Left lung (tissue), 14 donors: ENCODE measurements at regions of chr1 and their contacts with region 1.

Region 1: DNA sequence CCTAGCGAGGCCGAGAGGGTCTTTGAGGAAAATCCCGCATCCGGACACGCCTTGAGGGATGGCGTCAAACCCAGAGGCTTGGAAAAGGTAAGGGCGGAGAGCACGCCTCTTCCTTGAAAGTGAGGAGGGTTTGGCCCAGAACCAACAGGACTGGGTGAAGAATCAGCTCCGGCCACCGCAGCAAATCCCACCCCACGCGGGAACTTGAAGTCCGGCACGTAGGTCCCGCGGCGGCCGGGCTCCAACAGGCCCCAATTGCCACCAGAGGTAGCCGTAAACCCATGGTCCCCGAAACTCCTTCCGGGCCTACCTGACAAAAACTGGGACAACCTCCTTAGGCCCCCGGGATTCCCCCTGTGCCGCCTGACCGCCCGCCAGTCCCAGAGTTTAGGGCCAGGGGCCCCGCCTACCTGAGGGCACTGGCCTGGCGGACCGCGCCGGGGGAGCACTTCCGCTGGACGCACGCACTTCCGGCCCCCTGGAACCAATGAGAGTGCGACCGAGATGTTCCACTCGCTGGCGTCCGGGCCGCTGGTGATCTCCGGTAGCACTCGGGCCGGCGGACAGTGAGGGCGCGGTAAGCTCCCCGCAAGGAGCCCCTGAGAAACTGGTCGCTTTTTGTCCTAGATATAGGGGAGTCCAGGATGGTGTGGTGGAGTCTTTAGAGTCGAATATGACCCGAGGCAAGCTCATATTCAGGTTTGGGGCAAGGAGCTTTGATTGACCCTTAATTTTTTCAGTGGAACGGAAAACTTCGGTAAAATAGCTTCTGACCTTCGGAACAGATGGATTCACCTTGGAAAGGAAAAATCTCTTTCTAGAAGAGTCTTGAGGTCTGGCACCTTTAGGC is at the starts of genes LZIC and NMNAT1:
- DNase-seq: peak; percentile 90 to 96 (median 94)
- ATAC-seq: peak; percentile 99
- H3K4me3 ChIP-seq: peak within 1 kb of the TSS; percentile 63 to 65
- H3K27ac ChIP-seq: peak within 1 kb of the TSS; percentile 81 to 90
- H3K4me1 ChIP-seq: peaks cover 4 to 28% of the 10 kb centered on the region in 2 donors
- H3K27me3 ChIP-seq: no peaks in the 10 kb centered on the region
- CTCF ChIP-seq: peak in 1 of 2 donors; percentile 13
- polyA plus RNA-seq, gene LZIC: 59.9 to 72.8 (median 70.4) TPM
- polyA plus RNA-seq, gene NMNAT1: 15.4 to 19.6 (median 17.3) TPM

Region 2: GRCh38 chr1:9700340-9700739 is 242.8 kb before region 1 on chr1:
- intact Hi-C with region 1: loop called in 1 of 2 experiments (anchors 5 kb)
- DNase-seq: no peak
- ATAC-seq: no peak
- H3K4me3 ChIP-seq: no peak overlapping the region
- H3K27ac ChIP-seq: no peak overlapping the region
- H3K4me1 ChIP-seq: peaks cover 0 to 33% of the 10 kb centered on the region in 2 donors
- H3K27me3 ChIP-seq: no peaks in the 10 kb centered on the region
- CTCF ChIP-seq: no peak

Region 3: DNA sequence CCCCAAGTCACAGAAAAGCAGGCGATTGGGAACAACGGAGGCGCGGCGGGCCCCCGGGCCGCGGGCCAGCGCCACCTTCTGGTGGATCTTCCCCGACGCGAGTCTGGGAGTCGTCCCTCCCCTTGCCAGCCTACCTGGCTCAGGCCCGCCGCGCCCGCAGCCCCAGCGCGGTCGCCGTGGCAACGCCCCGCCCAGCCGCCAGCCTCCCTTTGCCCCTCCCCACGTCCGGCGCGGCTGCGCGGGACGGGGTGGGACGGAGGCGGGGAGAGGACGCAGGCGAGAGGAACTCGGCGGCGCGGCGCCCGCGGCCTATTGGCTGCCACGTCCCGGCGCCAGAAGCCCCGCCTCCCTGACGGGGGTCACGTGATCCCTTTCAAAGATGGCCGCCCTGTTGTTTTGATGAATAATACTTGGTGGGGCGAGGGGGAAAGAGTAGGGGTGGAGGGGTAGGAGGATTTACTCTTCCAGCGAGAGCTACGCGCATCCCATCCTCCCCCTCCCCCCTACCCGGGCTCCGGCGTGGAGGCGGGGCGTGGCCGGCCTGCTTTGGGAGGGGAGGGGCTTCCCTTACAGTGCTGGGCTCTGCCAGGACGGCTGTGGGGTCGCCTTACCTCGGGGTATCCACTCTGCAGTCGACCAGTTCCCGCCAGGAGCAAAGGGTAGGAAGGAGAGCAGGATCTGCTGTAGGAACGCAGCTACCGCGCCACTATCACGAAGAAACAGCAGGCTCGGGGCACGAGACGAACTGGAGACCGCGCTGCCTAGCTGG is 89.6 kb after region 1 on chr1 and contains the start of gene UBE4B:
- intact Hi-C with region 1: loop called in 1 of 2 experiments (anchors 10 kb)
- DNase-seq: peak; percentile 97 to 100 (median 98)
- ATAC-seq: peak; percentile 99
- H3K4me3 ChIP-seq: peak within 1 kb of the TSS; percentile 70 to 98
- H3K27ac ChIP-seq: peak within 1 kb of the TSS; percentile 89 to 94
- H3K4me1 ChIP-seq: peaks cover 9 to 28% of the 10 kb centered on the region in 2 donors
- H3K27me3 ChIP-seq: no peaks in the 10 kb centered on the region
- CTCF ChIP-seq: peak; percentile 71 to 96
- polyA plus RNA-seq, gene UBE4B: 46.4 to 54.1 (median 48.5) TPM